ENCODE measurements at regions of chr6 and their contacts with region 1.

Region 1: GRCh38 chr6:436308-437036 is 44.9 kb downstream of the IRF4 start:
- DNase-seq: no peak
- ATAC-seq: no peak
- H3K4me3 ChIP-seq: no peak overlapping the region
- H3K27ac ChIP-seq: no peak overlapping the region
- H3K4me1 ChIP-seq: no peaks in the 10 kb centered on the region
- H3K27me3 ChIP-seq: peaks cover 0 to 4% (median 0%) of the 10 kb centered on the region in 3 donors
- CTCF ChIP-seq: no peak

Region 2: GRCh38 chr6:2324166-2324953 is 1887.9 kb after region 1 on chr6:
- intact Hi-C with region 1: loop called in 1 of 2 experiments (anchors 10 kb)
- DNase-seq: no peak
- ATAC-seq: no peak
- H3K4me3 ChIP-seq: no peak overlapping the region
- H3K27ac ChIP-seq: no peak overlapping the region
- H3K4me1 ChIP-seq: no peaks in the 10 kb centered on the region
- H3K27me3 ChIP-seq: no peaks in the 10 kb centered on the region
- CTCF ChIP-seq: no peak

Measured in psoas muscle (tissue), 8 donors.